ENCODE measurements at regions of chr1 and their contacts with region 1.

Region 1: DNA sequence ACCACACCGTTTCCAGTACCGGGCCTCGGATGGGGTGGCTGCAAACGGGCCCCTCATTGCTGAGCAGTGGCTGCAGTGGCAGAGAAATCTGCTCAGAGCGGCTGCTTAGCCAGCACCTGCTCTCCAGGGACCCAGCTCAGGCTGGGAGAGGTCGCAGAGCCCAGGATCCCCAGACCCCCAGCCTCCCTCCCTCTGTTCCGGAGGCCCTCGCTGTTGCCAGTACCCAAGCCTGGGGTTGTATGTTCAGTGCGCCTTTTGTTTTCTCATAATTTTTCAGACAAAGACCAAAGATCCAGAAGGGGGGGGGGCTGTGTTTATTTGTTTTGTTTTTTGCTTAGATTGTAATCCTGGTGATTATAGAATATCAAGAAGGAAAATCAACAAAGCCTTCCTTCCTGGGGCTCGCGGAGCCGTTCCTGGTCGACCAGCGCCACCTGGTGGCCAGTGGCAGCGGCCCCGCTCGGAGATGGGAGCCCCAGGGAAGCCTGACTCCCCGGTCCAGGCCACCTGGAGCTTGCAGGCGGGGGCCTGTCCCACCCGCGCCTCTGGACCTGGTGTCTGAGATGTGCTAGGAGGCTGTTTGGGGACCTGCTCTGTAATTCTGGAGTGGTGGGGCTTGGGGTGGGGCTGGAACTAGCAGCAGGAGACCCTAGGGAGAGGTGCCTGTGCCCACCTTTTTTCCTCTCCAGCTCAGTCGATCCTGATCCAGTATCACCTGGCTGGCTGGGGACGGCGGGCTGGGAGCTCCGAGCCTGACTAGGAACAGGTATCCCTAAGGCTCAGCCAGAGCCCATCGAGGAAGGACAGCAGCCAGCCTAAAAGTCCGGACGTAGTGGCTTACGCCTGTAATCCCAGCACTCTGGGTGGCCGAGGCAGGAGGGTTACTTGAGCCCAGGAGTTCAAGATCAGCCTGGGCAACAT is 123.9 kb upstream of the VAMP3 start:
- DNase-seq: peak; percentile 34
- H3K4me3 Mint-ChIP-seq: no peak overlapping the region
- H3K27ac Mint-ChIP-seq: no peak overlapping the region
- H3K4me1 Mint-ChIP-seq: no peaks in the 10 kb centered on the region
- H3K27me3 Mint-ChIP-seq: no peaks in the 10 kb centered on the region

Region 2: GRCh38 chr1:7042322-7043190 is 604.7 kb before region 1 on chr1:
- intact Hi-C with region 1: loop called (anchors 5 kb)
- DNase-seq: no peak
- H3K4me3 Mint-ChIP-seq: no peak overlapping the region
- H3K27ac Mint-ChIP-seq: no peak overlapping the region
- H3K4me1 Mint-ChIP-seq: no peaks in the 10 kb centered on the region
- H3K27me3 Mint-ChIP-seq: no peaks in the 10 kb centered on the region

Region 3: GRCh38 chr1:7454052-7454815 is 193.0 kb before region 1 on chr1:
- intact Hi-C with region 1: loop called (anchors 5 kb)
- DNase-seq: no peak
- H3K4me3 Mint-ChIP-seq: no peak overlapping the region
- H3K27ac Mint-ChIP-seq: no peak overlapping the region
- H3K4me1 Mint-ChIP-seq: no peaks in the 10 kb centered on the region
- H3K27me3 Mint-ChIP-seq: no peaks in the 10 kb centered on the region